Caco-2 (cell line): ENCODE measurements at regions of chr12 and their contacts with region 1.

Region 1: GRCh38 chr12:92987362-92987761 is 58.3 kb upstream of the EEA1 start:
- DNase-seq: peak in 1 of 2 experiments; percentile 75
- H3K4me3 ChIP-seq: no peak overlapping the region
- H3K4me3 Mint-ChIP-seq: peak overlapping the region; percentile 27
- H3K27ac Mint-ChIP-seq: peak overlapping the region; percentile 87
- H3K4me1 ChIP-seq: peaks cover 30% of the 10 kb centered on the region
- H3K4me1 Mint-ChIP-seq: peaks cover 33% of the 10 kb centered on the region
- H3K27me3 ChIP-seq: no peaks in the 10 kb centered on the region
- H3K27me3 Mint-ChIP-seq: no peaks in the 10 kb centered on the region
- CTCF ChIP-seq: peak; percentile 50 to 79

Region 2: DNA sequence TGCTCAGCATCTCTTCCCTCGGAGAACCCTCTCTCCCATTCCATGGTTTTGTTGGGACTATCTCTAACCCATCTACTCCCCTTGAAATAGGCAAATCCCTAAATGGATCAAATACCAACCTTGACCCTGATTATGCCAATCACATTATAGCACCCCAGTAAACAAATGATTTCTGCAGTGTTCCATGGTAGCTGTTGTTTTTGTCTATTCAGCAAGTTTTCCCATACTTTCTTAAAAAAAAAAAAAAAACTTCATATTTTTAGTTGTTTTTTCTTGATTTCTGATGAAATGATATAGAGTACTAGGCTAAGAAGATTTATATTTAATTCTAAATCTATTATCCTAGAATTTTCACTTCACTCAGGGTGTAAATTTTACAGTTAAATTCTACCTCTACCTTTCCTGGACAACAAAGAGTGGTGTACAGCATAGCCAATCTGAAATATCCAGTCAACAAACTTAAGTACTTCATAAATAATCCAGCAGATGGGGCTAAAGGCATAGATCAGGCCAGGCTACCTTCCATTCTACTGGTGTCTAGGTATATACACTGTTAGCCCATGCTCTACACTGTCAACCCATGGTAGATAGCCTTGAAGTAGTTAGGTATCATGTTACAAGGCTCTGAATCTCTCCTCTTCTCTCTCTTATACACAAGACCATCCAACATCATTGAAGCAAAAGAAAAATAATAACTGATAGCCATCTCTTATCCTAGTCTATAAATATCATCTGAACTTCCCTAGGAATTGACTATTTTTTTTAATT is 202.4 kb before region 1 on chr12:
- CTCF ChIA-PET with region 1: no interaction called
- POLR2A ChIA-PET with region 1: no interaction called
- intact Hi-C with region 1: loop called (anchors 5 kb)
- DNase-seq: peak; percentile 55 to 80
- H3K4me3 ChIP-seq: no peak overlapping the region
- H3K4me3 Mint-ChIP-seq: no peak overlapping the region
- H3K27ac Mint-ChIP-seq: no peak overlapping the region
- H3K4me1 ChIP-seq: no peaks in the 10 kb centered on the region
- H3K4me1 Mint-ChIP-seq: peaks cover 8% of the 10 kb centered on the region
- H3K27me3 ChIP-seq: no peaks in the 10 kb centered on the region
- H3K27me3 Mint-ChIP-seq: no peaks in the 10 kb centered on the region
- CTCF ChIP-seq: peak; percentile 45 to 64

Region 3: GRCh38 chr12:93019975-93020630 is 32.7 kb after region 1 on chr12:
- CTCF ChIA-PET with region 1: interaction called, 8 read pairs
- POLR2A ChIA-PET with region 1: interaction called, 5 read pairs
- intact Hi-C with region 1: loop called (anchors 1 kb)
- DNase-seq: peak; percentile 92 to 96
- H3K4me3 ChIP-seq: no peak overlapping the region
- H3K4me3 Mint-ChIP-seq: peak overlapping the region; percentile 13
- H3K27ac Mint-ChIP-seq: peak overlapping the region; percentile 89
- H3K4me1 ChIP-seq: peaks cover 89% of the 10 kb centered on the region
- H3K4me1 Mint-ChIP-seq: peaks cover 63% of the 10 kb centered on the region
- H3K27me3 ChIP-seq: no peaks in the 10 kb centered on the region
- H3K27me3 Mint-ChIP-seq: no peaks in the 10 kb centered on the region
- CTCF ChIP-seq: no peak

Region 4: GRCh38 chr12:93121729-93122488 is 134.5 kb after region 1 on chr12:
- CTCF ChIA-PET with region 1: interaction called, 10 read pairs
- POLR2A ChIA-PET with region 1: interaction called, 3 read pairs
- intact Hi-C with region 1: loop called (anchors 1 kb)
- DNase-seq: no peak
- H3K4me3 ChIP-seq: peak overlapping the region; percentile 24
- H3K4me3 Mint-ChIP-seq: peak overlapping the region; percentile 74
- H3K27ac Mint-ChIP-seq: peak overlapping the region; percentile 95
- H3K4me1 ChIP-seq: peaks cover 67% of the 10 kb centered on the region
- H3K4me1 Mint-ChIP-seq: peaks cover 50% of the 10 kb centered on the region
- H3K27me3 ChIP-seq: no peaks in the 10 kb centered on the region
- H3K27me3 Mint-ChIP-seq: no peaks in the 10 kb centered on the region
- CTCF ChIP-seq: no peak

Region 5: GRCh38 chr12:93378373-93379325 is 391.3 kb after region 1 on chr12:
- CTCF ChIA-PET with region 1: interaction called, 4 read pairs
- POLR2A ChIA-PET with region 1: no interaction called
- intact Hi-C with region 1: loop called (anchors 2 kb)
- DNase-seq: peak in 1 of 2 experiments; percentile 26
- H3K4me3 ChIP-seq: peak overlapping the region; percentile 83
- H3K4me3 Mint-ChIP-seq: peak overlapping the region; percentile 80
- H3K27ac Mint-ChIP-seq: peak overlapping the region; percentile 90
- H3K4me1 ChIP-seq: peaks cover 36% of the 10 kb centered on the region
- H3K4me1 Mint-ChIP-seq: peaks cover 25% of the 10 kb centered on the region
- H3K27me3 ChIP-seq: no peaks in the 10 kb centered on the region
- H3K27me3 Mint-ChIP-seq: no peaks in the 10 kb centered on the region
- CTCF ChIP-seq: no peak

Region 6: DNA sequence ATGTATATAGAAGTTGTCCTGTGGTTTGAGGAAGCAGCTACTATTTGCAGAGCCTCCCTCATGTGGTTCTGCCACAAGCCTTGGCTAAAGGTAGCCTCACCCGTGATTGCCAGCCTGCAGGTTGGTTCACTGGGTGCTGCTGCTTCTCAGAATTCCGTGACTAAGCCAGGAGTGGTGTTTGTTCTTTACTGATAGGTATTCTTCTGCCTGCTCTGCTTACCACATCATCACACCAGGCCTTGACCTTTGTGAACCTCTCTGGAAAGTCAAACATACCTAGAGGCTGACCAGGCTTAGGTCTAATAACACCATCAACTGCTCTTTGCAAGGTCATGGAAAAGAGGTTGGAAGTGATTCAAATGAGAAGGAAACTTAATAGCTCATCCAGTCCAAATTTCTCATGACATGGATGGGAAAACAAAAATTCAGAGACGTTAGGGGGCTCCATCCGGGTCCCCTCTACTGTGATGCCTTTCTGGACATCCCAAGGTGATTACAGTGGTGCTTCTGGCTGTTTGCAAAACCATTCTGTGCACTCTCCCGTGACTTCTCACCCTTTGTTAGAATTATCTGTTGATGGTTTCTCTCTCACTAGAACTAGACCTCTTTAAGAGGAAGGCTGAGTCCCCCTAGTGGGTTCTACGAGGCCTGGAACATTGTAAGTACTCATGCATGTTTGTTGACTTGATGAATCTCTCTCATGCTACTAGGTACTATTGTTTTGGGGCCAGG is 576.6 kb after region 1 on chr12:
- CTCF ChIA-PET with region 1: no interaction called
- POLR2A ChIA-PET with region 1: no interaction called
- intact Hi-C with region 1: loop called (anchors 2 kb)
- DNase-seq: peak; percentile 82 to 85
- H3K4me3 ChIP-seq: no peak overlapping the region
- H3K4me3 Mint-ChIP-seq: peak overlapping the region; percentile 47
- H3K27ac Mint-ChIP-seq: peak overlapping the region; percentile 64
- H3K4me1 ChIP-seq: peaks cover 31% of the 10 kb centered on the region
- H3K4me1 Mint-ChIP-seq: peaks cover 33% of the 10 kb centered on the region
- H3K27me3 ChIP-seq: no peaks in the 10 kb centered on the region
- H3K27me3 Mint-ChIP-seq: no peaks in the 10 kb centered on the region
- CTCF ChIP-seq: no peak